ENCODE measurements at regions of chr3 and their contacts with region 1.

Region 1: GRCh38 chr3:141105828-141106628 is 54.9 kb downstream of the SPSB4 start:
- DNase-seq: peak; percentile 81
- ATAC-seq: peak; percentile 95
- H3K4me3 ChIP-seq: no peak overlapping the region
- H3K27ac ChIP-seq: no peak overlapping the region
- H3K4me1 ChIP-seq: no peaks in the 10 kb centered on the region
- H3K27me3 ChIP-seq: no peaks in the 10 kb centered on the region
- CTCF ChIP-seq: peak; percentile 68 to 89 (median 81)
- POLR2A ChIP-seq: no peak
- RAD21 ChIP-seq: peak; percentile 69

Region 2: DNA sequence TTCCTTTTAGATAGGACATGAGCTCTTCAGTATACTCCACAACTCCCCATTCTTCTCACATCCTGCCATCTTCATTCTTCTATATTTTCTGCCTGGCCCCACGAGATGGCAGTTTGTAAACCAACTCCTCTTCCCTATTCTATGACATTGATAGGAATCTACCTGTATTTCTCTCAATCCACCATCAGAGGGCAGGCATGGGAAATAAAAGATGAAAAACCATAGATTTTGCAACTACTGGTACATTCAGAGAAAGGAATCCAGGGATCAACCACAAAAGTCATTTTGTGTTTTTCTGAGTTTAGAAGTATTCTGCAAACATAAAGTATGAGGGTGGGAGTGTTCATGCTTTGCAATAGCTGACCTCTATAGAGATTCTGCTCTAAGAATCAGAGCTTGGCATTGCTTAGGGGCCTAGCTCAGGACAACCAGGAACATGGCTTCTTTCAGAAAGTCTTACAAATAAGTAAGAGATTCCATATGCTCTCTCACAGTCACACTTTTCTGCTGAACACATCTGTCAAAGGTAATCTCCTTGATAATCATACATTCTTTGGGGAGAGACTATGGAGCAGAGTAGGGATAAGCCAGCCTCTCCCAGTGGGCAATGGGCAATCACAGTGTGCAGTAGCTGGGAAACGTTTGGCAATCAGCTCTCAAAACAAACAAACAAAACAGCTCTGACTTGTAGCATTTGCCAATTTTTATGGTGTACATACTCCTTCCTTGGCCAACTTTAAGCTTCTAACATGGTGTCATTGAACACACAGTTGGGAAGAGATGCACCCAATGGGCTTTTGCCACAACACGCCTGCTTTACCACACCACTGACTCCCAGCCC is 207.5 kb before region 1 on chr3:
- CTCF ChIA-PET with region 1: interaction called, 3 read pairs
- POLR2A ChIA-PET with region 1: no interaction called
- RAD21 ChIA-PET with region 1: interaction called in 1 of 2 experiments, 3 read pairs
- intact Hi-C with region 1: loop called (anchors 1 kb)
- DNase-seq: peak; percentile 46
- ATAC-seq: peak; percentile 95
- H3K4me3 ChIP-seq: no peak overlapping the region
- H3K27ac ChIP-seq: no peak overlapping the region
- H3K4me1 ChIP-seq: no peaks in the 10 kb centered on the region
- H3K27me3 ChIP-seq: peaks cover 16% of the 10 kb centered on the region
- CTCF ChIP-seq: peak; percentile 52 to 92 (median 61)
- POLR2A ChIP-seq: no peak
- RAD21 ChIP-seq: peak; percentile 73

Region 3: GRCh38 chr3:141000027-141000663 is 105.9 kb before region 1 on chr3:
- CTCF ChIA-PET with region 1: interaction called, 19 read pairs
- POLR2A ChIA-PET with region 1: no interaction called
- RAD21 ChIA-PET with region 1: no interaction called
- intact Hi-C with region 1: loop called (anchors 1 kb)
- DNase-seq: peak; percentile 54
- ATAC-seq: peak; percentile 99
- H3K4me3 ChIP-seq: no peak overlapping the region
- H3K27ac ChIP-seq: no peak overlapping the region
- H3K4me1 ChIP-seq: no peaks in the 10 kb centered on the region
- H3K27me3 ChIP-seq: no peaks in the 10 kb centered on the region
- CTCF ChIP-seq: peak; percentile 76 to 90 (median 81)
- POLR2A ChIP-seq: no peak
- RAD21 ChIP-seq: peak; percentile 88

Measured in HCT116 (cell line).